CD4-positive, alpha-beta T cell (primary cell): ENCODE measurements at regions of chr20 and their contacts with region 1.

Region 1: DNA sequence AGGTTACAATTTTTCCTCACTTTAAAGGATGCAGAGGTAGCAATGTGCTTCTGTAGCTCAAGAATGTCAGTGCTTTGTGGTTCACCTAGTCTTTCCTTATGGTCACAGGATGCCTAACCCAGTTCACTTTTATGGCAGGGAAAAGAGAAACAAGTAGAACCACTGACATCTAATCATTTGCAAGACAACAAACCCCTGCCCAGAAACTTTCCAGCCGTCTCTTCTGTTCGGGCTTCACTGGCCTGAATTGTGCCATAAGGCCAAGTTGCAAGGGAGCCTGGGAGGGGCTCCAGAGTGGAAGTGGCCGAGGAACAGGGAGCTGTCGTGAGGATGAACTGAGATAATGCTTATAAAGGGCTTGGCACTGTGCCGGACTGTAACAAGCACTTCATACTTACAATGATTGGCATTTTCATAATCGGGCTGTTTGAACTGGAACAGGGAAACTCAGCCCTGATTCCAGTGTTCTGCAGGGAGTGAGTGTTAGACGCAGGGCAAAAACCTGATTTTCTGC is 212.6 kb downstream of the BCAS1 start:
- DNase-seq: no peak
- ATAC-seq: no peak
- H3K4me3 ChIP-seq: no peak overlapping the region
- H3K4me3 Mint-ChIP-seq: no peak overlapping the region
- H3K27ac ChIP-seq: no peak overlapping the region
- H3K27ac Mint-ChIP-seq: peak overlapping the region; percentile 36
- H3K4me1 ChIP-seq: peaks cover 11% of the 10 kb centered on the region
- H3K4me1 Mint-ChIP-seq: peaks cover 32% of the 10 kb centered on the region
- H3K27me3 ChIP-seq: no peaks in the 10 kb centered on the region
- H3K27me3 Mint-ChIP-seq: no peaks in the 10 kb centered on the region
- CTCF ChIP-seq: no peak

Region 2: GRCh38 chr20:53539516-53539915 is 318.3 kb before region 1 on chr20:
- CTCF ChIA-PET with region 1: no interaction called
- POLR2A ChIA-PET with region 1: no interaction called
- intact Hi-C with region 1: no loop called
- DNase-seq: no peak
- ATAC-seq: no peak
- H3K4me3 ChIP-seq: no peak overlapping the region
- H3K4me3 Mint-ChIP-seq: no peak overlapping the region
- H3K27ac ChIP-seq: no peak overlapping the region
- H3K27ac Mint-ChIP-seq: no peak overlapping the region
- H3K4me1 ChIP-seq: no peaks in the 10 kb centered on the region
- H3K4me1 Mint-ChIP-seq: no peaks in the 10 kb centered on the region
- H3K27me3 ChIP-seq: no peaks in the 10 kb centered on the region
- H3K27me3 Mint-ChIP-seq: no peaks in the 10 kb centered on the region
- CTCF ChIP-seq: no peak

Region 3: GRCh38 chr20:53738039-53738944 is 119.5 kb before region 1 on chr20:
- CTCF ChIA-PET with region 1: no interaction called
- POLR2A ChIA-PET with region 1: no interaction called
- intact Hi-C with region 1: loop called in 1 of 2 experiments (anchors 5 kb)
- DNase-seq: no peak
- ATAC-seq: no peak
- H3K4me3 ChIP-seq: no peak overlapping the region
- H3K4me3 Mint-ChIP-seq: no peak overlapping the region
- H3K27ac ChIP-seq: no peak overlapping the region
- H3K27ac Mint-ChIP-seq: no peak overlapping the region
- H3K4me1 ChIP-seq: peaks cover 19% of the 10 kb centered on the region
- H3K4me1 Mint-ChIP-seq: peaks cover 54% of the 10 kb centered on the region
- H3K27me3 ChIP-seq: no peaks in the 10 kb centered on the region
- H3K27me3 Mint-ChIP-seq: no peaks in the 10 kb centered on the region
- CTCF ChIP-seq: no peak